ENCODE measurements at regions of chr16 and their contacts with region 1.

Region 1: GRCh38 chr16:29961479-29962343 is at the start of gene TMEM219:
- DNase-seq: peak; percentile 98
- ATAC-seq: peak; percentile 90
- H3K4me3 Mint-ChIP-seq: peak within 1 kb of the TSS; percentile 88
- H3K27ac Mint-ChIP-seq: peak within 1 kb of the TSS; percentile 90
- H3K4me1 Mint-ChIP-seq: peaks cover 17% of the 10 kb centered on the region
- H3K27me3 Mint-ChIP-seq: no peaks in the 10 kb centered on the region
- CTCF ChIP-seq: no peak
- total RNA-seq, gene TMEM219: 50.3 and 50.8 TPM in 2 replicates

Region 2: DNA sequence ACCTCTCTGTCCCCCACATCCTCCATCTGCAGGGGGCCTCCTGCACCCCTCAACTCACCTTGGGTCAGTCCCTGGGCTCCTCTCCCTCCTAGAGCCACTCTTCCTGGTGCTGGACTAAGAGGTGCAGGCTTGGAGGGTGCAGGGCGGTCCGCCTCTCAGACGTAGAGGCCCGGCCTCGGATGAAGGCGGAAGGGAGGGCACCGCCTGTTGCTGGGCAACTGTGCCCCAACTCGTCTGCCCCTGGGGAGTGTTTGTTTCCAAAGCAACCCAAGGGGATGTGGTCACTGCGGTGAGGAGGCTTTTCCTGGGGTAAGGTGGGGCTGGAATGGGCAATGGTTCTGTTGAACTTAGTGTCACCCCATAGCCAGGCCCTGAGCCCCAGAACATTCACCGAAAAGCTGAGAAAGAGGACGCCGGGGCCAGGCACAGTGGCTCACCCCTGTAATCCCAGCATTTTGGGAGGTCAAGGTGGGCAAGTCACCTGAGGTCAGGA is 215.8 kb before region 1 on chr16 and contains the start of gene C16orf54:
- CTCF ChIA-PET with region 1: no interaction called
- POLR2A ChIA-PET with region 1: no interaction called
- intact Hi-C with region 1: loop called (anchors 5 kb)
- DNase-seq: peak; percentile 80
- ATAC-seq: peak; percentile 86
- H3K4me3 Mint-ChIP-seq: peak within 1 kb of the TSS; percentile 94
- H3K27ac Mint-ChIP-seq: peak within 1 kb of the TSS; percentile 96
- H3K4me1 Mint-ChIP-seq: peaks cover 65% of the 10 kb centered on the region
- H3K27me3 Mint-ChIP-seq: no peaks in the 10 kb centered on the region
- CTCF ChIP-seq: no peak
- total RNA-seq, gene C16orf54: 20.4 and 22.5 TPM in 2 replicates

Region 3: DNA sequence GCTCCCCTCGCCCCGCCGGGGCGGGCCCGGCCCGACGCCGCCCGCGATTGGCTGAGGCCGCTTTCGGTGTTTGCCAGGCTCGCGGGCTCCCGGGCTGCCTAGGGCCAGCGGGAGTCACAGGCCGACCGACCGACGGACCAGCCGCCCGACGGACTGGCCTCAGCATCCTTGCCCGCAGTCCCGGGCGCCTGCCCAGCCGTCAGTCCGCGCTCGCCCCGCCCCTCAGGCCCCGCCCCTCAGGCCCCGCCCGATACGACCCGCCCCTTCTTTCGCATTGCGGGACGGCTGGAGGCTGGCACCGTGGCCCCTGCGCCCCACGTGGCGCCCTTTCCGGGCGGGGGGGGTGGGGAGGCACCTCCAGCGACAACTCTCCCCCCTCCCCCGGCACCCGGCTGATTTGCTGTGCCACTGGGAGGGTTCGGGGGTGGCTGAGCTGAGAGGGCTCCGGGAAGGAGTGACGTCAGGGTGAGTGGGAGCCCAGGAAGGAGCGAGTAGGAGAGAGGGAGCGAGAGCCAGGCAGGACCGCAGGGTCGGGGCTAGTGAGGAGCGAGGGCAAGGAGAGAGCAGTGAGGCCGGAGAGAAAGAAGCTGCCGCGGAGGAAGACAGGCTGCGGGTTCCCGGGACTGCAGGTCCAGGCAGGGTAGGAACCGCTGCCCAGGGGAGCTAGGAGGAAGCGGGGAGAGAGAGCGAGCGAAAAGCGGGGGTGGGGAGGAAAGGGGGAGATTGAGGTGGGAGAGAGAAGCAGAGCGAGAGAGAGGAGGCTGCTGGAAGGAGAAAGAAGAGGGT is 61.4 kb before region 1 on chr16 and contains the start of gene ASPHD1:
- CTCF ChIA-PET with region 1: no interaction called
- POLR2A ChIA-PET with region 1: no interaction called
- intact Hi-C with region 1: loop called (anchors 1 kb)
- DNase-seq: no peak
- ATAC-seq: peak; percentile 90
- H3K4me3 Mint-ChIP-seq: peak within 1 kb of the TSS; percentile 77
- H3K27ac Mint-ChIP-seq: no peak within 1 kb of the TSS
- H3K4me1 Mint-ChIP-seq: peaks cover 5% of the 10 kb centered on the region
- H3K27me3 Mint-ChIP-seq: peaks cover 33% of the 10 kb centered on the region
- CTCF ChIP-seq: no peak
- total RNA-seq, gene ASPHD1: 0.12 TPM in 1 of 2 replicates, not detected in the other

Region 4: GRCh38 chr16:29973384-29974246 is 11.9 kb after region 1 on chr16 and contains the start of gene TAOK2:
- CTCF ChIA-PET with region 1: interaction called, 6 read pairs
- POLR2A ChIA-PET with region 1: interaction called, 67 read pairs
- intact Hi-C with region 1: loop called (anchors 1 kb)
- DNase-seq: peak; percentile 95
- ATAC-seq: peak; percentile 99
- H3K4me3 Mint-ChIP-seq: peak within 1 kb of the TSS; percentile 96
- H3K27ac Mint-ChIP-seq: peak within 1 kb of the TSS; percentile 90
- H3K4me1 Mint-ChIP-seq: peaks cover 39% of the 10 kb centered on the region
- H3K27me3 Mint-ChIP-seq: no peaks in the 10 kb centered on the region
- CTCF ChIP-seq: no peak
- total RNA-seq, gene TAOK2: 30.5 and 36.1 TPM in 2 replicates

Region 5: DNA sequence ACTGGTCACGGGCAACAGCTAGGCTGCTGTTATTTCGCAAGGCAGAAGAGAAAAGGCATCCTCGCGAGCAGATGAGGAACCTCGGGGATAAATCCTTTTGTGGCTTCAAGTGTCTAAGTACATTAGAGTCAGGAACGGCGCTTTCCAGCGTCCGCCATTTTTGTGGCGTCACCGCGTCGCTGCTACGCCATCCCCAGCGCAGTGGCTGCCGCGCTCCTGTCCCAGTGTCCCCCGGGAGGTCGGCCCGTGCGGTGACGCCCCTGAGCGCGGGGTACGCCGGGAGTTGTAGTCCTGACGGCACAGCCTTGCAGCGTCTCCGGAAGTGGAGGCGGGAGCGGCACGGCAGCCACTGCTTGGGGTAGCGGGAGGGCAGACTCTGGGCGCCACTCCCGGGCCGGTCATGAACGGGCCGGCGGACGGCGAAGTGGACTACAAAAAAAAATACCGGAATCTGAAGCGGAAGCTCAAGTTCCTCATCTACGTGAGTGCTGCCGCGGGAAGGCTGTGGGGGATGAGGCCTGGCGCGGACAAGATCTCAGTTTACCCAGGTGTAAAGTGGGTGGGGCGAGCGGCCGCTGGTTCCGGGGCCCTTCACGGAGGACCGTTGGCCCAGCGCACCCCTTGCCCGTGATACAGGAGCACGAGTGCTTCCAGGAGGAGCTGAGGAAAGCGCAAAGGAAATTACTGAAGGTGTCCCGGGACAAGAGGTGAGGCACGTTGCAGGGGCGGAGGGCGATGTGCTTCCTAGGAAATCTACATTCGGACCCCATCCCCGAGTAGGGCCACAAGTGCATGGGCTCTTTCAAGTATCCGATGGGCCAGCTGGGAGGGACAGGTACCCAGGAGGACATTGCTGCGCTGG is 34.4 kb after region 1 on chr16 and contains the start of gene INO80E:
- CTCF ChIA-PET with region 1: interaction called, 5 read pairs
- POLR2A ChIA-PET with region 1: interaction called, 4 read pairs
- intact Hi-C with region 1: loop called (anchors 1 kb)
- DNase-seq: peak; percentile 100
- ATAC-seq: peak; percentile 96
- H3K4me3 Mint-ChIP-seq: peak within 1 kb of the TSS; percentile 98
- H3K27ac Mint-ChIP-seq: peak within 1 kb of the TSS; percentile 97
- H3K4me1 Mint-ChIP-seq: peaks cover 29% of the 10 kb centered on the region
- H3K27me3 Mint-ChIP-seq: no peaks in the 10 kb centered on the region
- CTCF ChIP-seq: no peak
- total RNA-seq, gene INO80E: 83.5 and 93.6 TPM in 2 replicates

Region 6: DNA sequence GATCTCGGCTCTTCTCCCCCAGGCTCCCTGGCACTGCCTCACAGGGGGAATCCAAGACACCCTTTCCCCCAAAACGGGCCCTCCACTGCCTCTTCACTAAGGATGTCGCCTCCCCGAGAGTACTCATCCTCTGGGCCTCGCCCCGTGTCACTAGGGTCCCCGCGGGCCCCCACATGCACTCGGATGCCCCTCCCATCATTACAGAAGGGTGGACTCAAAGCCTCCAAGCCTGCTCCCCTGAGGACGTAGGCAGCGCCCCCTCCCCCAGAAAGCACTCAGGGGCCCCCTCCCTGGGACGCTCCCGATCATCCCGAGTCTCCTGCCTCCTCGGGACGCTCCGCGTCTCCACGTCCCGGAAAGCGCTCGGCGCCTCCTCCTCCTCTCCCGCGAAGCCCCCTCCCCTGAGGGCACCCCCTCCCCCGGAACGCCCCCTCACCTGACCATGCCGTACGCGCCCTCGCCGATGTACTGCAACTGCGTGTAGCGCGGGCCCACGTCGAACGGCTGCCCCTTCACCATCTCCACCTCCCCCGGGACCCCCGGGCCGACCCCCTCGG is 161.0 kb after region 1 on chr16:
- CTCF ChIA-PET with region 1: no interaction called
- POLR2A ChIA-PET with region 1: no interaction called
- intact Hi-C with region 1: no loop called
- DNase-seq: peak; percentile 21
- ATAC-seq: peak; percentile 5
- H3K4me3 Mint-ChIP-seq: peak overlapping the region; percentile 86
- H3K27ac Mint-ChIP-seq: peak overlapping the region; percentile 76
- H3K4me1 Mint-ChIP-seq: peaks cover 22% of the 10 kb centered on the region
- H3K27me3 Mint-ChIP-seq: no peaks in the 10 kb centered on the region
- CTCF ChIP-seq: no peak

Measured in activated B cell treated with CpG ODN at 0.5 μM for 24 hours (primary cell).